Pancreas (tissue), 10 donors: ENCODE measurements at regions of chr2 and their contacts with region 1.

Region 1: DNA sequence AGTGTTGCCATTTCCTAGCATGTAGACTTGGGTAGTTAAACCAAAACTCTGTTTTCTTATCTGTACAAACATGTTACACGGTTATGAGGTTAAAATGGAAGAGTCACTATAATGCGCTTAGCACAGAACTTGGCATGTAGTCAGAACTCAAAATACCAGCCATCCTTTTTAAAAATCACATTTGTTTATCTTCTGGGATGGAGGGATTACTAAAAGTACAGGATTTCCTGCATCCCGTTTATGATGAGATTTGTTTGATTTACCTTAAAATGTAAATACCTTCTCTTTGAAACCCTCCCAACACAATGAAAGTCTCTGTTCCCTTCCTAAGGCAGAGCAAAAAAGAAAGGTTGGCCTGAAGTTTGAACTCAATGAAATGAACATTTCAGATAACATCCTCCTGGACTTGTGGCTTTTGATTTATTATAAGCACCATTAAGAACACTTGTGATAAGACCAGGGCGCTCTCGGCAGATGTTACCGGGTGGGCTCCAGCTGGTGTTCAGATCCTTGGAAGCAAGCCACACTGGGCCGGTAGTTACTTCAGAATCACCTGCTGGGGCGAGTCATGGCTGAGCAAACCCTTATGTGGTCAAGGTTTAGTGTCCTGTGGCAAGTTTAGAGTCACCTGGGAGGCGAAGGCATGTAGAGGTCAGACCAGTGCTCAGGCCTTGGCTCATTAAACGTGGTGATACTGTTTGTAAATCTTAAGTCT is 105.7 kb downstream of the MGAT5 start:
- DNase-seq: no peak
- ATAC-seq: peak in 1 of 4 donors; percentile 40
- H3K4me3 ChIP-seq: no peak overlapping the region
- H3K27ac ChIP-seq: no peak overlapping the region
- H3K4me1 ChIP-seq: no peaks in the 10 kb centered on the region
- H3K27me3 ChIP-seq: no peaks in the 10 kb centered on the region
- CTCF ChIP-seq: no peak

Region 2: DNA sequence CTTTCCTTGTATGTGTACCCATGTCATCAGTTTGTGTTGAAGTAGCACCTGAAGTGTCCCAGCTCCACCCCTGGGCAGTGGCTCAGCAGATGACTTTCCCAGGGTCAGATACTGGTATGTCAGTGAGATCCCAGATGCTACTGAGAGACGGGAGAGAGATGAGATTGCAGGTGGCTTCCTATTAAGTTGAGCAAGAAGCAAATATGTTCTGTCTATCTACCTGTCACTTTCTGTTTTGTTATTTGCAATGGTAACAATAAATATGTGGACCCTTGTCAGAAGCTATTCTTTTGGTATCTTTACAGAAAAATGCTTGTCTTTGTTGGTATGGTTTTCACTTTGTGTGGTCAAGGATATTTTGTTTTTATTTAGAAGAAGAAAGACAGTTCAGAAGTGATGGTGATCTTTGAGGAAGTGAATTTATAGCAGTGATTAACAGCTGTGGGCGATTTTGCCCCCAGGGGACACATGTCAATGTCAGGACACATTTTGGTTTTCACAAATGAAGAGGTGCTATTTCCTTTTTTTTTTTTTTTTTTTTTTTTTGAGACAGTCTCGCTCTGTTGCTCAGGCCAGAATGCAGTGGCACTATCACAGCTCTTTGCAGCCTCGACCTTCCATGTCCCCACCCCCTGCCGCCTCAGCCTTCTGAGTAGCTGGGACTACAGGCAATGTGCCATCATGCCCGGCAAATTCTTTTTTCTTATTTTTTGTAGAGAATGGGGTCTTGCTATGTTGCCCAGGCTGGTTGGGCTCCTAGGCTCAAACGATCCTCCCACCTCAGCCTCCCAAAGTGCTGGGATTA is 84.3 kb before region 1 on chr2:
- intact Hi-C with region 1: loop called in 1 of 3 experiments (anchors 10 kb)
- DNase-seq: no peak
- ATAC-seq: no peak
- H3K4me3 ChIP-seq: no peak overlapping the region
- H3K27ac ChIP-seq: no peak overlapping the region
- H3K4me1 ChIP-seq: peaks cover 0 to 6% (median 5%) of the 10 kb centered on the region in 3 donors
- H3K27me3 ChIP-seq: no peaks in the 10 kb centered on the region
- CTCF ChIP-seq: no peak